ENCODE measurements at regions of chr1 and their contacts with region 1.

Region 1: DNA sequence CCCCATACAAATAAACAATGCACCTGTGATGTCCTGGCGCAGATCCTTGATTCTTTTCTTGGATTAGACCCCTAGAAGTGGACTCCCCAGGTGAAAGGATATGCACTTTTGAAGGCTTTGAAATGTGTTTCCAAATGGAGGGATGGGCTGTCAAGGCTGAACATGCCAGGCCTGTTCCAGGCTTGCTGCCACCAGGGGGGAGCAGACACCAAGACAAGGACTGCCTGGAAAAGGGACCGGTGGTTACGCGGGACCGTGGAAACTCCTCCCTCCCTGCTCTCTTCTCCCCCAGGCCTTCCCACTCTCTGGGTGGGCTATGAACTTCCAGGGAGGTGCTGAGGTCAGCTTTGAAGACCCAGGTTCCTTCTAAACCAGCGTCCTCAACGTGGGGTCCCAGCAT is 12.7 kb downstream of the C1QB start:
- DNase-seq: peak in 1 of 2 experiments; percentile 79
- H3K4me3 ChIP-seq: no peak overlapping the region
- H3K27ac ChIP-seq: no peak overlapping the region
- H3K4me1 ChIP-seq: peaks cover 0 to 1% (median 0%) of the 10 kb centered on the region in 4 experiments; a peak in 1 of 7 replicates
- H3K27me3 ChIP-seq: no peaks in the 10 kb centered on the region
- CTCF ChIP-seq: peak; percentile 81 to 91 (median 88)
- EP300 ChIP-seq: no peak
- POLR2A ChIP-seq: no peak
- RAD21 ChIP-seq: peak; percentile 94 to 95

Region 2: GRCh38 chr1:22625262-22625925 is 40.4 kb before region 1 on chr1:
- CTCF ChIA-PET with region 1: no interaction called
- POLR2A ChIA-PET with region 1: no interaction called
- DNase-seq: peak in 1 of 2 experiments; percentile 78
- H3K4me3 ChIP-seq: no peak overlapping the region
- H3K27ac ChIP-seq: no peak overlapping the region
- H3K4me1 ChIP-seq: peaks cover 6 to 31% (median 19%) of the 10 kb centered on the region in 4 experiments
- H3K27me3 ChIP-seq: no peaks in the 10 kb centered on the region
- CTCF ChIP-seq: no peak
- EP300 ChIP-seq: no peak
- POLR2A ChIP-seq: no peak
- RAD21 ChIP-seq: peak; percentile 19 to 34; a peak in 3 of 4 replicates

Region 3: DNA sequence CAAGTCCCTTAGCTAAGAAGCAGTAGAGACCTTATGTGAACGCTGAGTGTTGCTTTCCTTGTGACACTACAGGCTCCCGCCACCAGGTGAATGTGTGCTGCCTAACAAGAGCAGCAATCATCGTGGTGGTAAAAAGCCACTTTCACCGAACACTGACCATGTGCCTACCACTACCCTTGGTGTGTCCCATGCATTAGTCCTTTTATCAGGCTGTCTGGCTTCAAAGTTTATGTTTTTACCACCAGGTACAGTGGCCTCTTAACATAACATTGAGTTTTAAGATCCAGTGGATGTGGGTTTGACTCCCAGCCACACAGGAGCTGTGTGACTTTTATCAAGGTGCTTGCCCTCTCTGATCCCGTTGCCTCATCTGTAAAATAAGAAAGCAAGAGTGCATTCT is 11.1 kb before region 1 on chr1:
- CTCF ChIA-PET with region 1: interaction called, 10 read pairs
- POLR2A ChIA-PET with region 1: no interaction called
- DNase-seq: no peak
- H3K4me3 ChIP-seq: no peak overlapping the region
- H3K27ac ChIP-seq: no peak overlapping the region
- H3K4me1 ChIP-seq: no peaks in the 10 kb centered on the region; a peak in 1 of 7 replicates
- H3K27me3 ChIP-seq: no peaks in the 10 kb centered on the region; a peak in 3 of 7 replicates
- CTCF ChIP-seq: peak; percentile 22 to 68 (median 51)
- EP300 ChIP-seq: no peak
- POLR2A ChIP-seq: no peak
- RAD21 ChIP-seq: peak; percentile 13 to 33; a peak in 1 of 4 replicates

Region 4: DNA sequence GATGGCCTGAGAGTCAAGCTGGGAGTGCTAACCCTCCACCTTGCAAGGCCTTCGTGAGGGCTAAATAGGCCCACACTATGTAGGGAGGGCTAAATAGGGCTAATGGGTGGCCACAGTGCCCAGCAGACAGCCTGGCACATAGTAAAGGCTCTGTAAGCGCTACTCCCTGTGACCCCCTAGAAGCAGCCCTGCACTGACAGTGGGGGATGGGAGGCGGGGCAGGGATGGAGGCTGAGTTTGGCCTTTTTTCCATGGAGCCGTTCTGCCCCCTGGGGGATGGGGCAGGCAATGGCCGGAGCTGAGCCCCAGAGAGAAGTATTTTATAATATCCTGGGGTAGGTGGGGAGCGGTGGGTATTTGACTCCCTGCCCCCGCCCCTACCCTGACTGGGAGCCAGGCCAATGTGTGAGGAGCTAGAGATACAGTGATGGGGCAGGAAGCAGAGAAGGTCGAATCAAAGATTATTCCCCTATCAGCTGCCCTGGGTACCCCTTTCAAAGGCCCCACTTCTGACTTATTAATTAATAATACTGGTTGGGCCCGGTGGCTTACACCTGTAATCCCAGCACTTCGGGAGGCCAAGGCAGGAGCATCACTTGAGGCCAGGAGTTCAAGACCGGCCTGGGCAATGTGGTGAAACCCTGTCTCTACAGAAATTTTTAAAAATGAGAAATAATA is 264.6 kb after region 1 on chr1:
- CTCF ChIA-PET with region 1: interaction called, 18 read pairs
- POLR2A ChIA-PET with region 1: no interaction called
- DNase-seq: peak; percentile 44 to 95
- H3K4me3 ChIP-seq: no peak overlapping the region
- H3K27ac ChIP-seq: no peak overlapping the region
- H3K4me1 ChIP-seq: no peaks in the 10 kb centered on the region
- H3K27me3 ChIP-seq: no peaks in the 10 kb centered on the region; a peak in 1 of 7 replicates
- CTCF ChIP-seq: peak; percentile 81 to 93 (median 85)
- EP300 ChIP-seq: 0 out of 3 replicates have a peak, but pooled peaks of 1 of the 2 experiments have one; percentile 46
- POLR2A ChIP-seq: no peak
- RAD21 ChIP-seq: peak; percentile 94 to 98

Region 5: DNA sequence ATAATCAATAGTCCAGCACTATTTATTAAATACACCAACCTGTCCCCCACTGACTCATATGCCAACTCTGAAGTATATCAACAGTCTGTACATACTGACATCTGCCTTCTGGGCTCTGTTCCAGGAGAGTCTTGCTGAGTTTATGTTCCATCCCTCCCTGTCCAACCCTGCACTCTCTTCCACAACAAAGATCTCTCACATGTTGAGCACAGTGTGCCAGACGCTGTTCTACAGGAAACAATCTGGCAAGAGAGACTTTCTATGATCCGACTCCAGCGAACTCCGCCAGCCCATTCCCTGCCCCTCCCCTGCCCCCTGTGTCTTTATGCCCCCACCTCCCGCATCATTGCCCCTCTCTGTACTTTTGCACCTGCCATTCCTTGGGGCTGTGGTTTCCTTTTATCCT is 303.6 kb after region 1 on chr1:
- CTCF ChIA-PET with region 1: interaction called, 39 read pairs
- POLR2A ChIA-PET with region 1: no interaction called
- DNase-seq: no peak
- H3K4me3 ChIP-seq: no peak overlapping the region
- H3K27ac ChIP-seq: no peak overlapping the region
- H3K4me1 ChIP-seq: peaks cover 0 to 2% (median 0%) of the 10 kb centered on the region in 4 experiments; a peak in 1 of 7 replicates
- H3K27me3 ChIP-seq: no peaks in the 10 kb centered on the region; a peak in 1 of 7 replicates
- CTCF ChIP-seq: no peak
- EP300 ChIP-seq: no peak
- POLR2A ChIP-seq: no peak
- RAD21 ChIP-seq: no peak

Measured in H1 (cell line).